ENCODE measurements at regions of chr15 and their contacts with region 1.

Region 1: DNA sequence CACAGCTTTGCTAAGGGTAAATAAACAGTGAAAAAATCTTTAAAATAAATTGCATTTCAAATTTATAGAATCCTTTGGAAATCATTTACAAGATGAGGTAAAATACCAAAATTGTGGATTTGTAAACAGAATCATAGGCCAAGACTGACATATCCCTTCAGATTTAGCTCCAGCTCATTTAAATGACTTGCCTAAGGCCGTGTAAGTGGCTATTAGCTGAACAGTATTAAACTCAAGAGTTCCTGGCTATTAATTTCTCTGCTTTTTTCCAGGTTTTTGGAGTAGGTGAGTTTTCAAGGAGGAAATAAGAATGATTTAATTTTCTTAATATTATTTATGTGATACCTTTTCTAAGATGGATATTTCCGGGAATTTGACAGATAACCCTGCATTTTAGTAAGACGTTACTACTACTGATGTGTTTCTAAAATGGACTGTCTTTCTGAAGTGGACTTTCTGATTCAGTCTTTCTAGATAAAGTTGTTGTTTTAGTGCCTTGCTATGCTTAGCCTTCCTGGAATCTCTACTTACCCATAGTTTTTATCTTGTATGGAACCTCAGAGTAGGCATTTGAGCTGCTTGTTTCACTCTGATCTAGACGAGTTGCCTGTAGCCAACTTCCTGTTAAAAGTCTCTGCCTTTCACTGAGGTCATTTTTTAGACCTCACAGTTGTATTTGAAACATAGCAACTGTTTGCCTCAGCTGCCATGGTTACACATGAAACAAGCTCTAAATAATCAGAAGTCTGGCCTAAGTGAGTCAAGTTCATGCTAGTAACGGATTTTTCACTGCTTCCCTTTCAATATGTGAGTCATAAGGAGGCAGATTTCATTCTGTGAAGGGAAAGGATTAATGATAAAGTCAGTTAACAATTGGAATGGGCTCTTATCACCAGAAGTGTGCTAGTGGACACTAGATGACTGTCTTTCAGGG is 127.0 kb downstream of the KLHL25 start:
- DNase-seq: peak in 1 of 2 donors; percentile 87
- H3K4me3 ChIP-seq: peak overlapping the region in 1 of 2 donors; percentile 28
- H3K27ac ChIP-seq: peak overlapping the region; percentile 92 to 93
- H3K4me1 ChIP-seq: peaks cover 15 to 23% of the 10 kb centered on the region in 2 donors
- H3K27me3 ChIP-seq: no peaks in the 10 kb centered on the region
- CTCF ChIP-seq: no peak

Region 2: GRCh38 chr15:85630311-85630710 is 37.4 kb before region 1 on chr15:
- intact Hi-C with region 1: no loop called
- DNase-seq: no peak
- H3K4me3 ChIP-seq: no peak overlapping the region
- H3K27ac ChIP-seq: no peak overlapping the region
- H3K4me1 ChIP-seq: peaks cover 4 to 38% of the 10 kb centered on the region in 2 donors
- H3K27me3 ChIP-seq: no peaks in the 10 kb centered on the region
- CTCF ChIP-seq: no peak

Region 3: DNA sequence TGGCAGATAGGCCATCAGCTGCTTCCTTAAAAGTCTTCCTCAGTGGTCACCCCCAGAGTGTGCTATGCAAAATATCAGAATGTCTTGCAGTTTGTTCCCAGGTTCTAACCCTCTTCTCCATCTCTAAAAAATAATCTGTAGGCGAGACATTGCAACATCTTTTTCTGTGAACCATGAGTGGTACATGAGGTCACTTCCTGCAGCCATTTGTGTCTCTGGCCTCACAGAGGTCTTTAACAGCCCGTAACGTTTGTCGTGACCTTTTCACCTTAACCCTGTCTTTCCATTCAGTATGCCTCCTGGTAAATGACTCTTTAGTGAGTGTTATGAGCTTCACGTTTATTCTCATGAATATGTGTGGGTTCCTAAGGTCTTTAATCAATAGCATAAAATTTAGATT is 18.4 kb before region 1 on chr15:
- intact Hi-C with region 1: loop called (anchors 2 kb)
- DNase-seq: peak in 1 of 2 donors; percentile 73
- H3K4me3 ChIP-seq: no peak overlapping the region
- H3K27ac ChIP-seq: peak overlapping the region; percentile 51 to 75
- H3K4me1 ChIP-seq: peaks cover 0 to 30% of the 10 kb centered on the region in 2 donors
- H3K27me3 ChIP-seq: no peaks in the 10 kb centered on the region
- CTCF ChIP-seq: no peak

Region 4: DNA sequence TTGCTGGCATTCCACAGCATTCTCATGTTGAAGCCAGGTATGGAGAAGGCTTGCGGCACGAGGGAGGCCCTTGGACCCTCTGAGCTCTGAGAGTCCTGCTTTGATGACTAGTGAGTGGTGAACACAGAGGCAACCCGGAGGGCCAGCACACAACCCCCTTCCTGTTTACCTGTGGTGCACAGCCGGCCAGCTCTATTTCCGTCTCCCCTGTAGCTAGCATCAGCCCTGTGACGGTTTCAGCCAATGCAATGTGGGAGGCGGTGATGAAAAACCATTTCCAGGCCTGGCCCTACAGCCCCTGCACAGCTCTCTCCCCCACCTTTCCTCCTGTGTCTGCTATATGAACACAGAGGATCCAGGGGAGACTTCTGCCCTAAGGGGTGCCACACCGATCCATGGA is 203.8 kb after region 1 on chr15:
- intact Hi-C with region 1: no loop called
- DNase-seq: no peak
- H3K4me3 ChIP-seq: no peak overlapping the region
- H3K27ac ChIP-seq: no peak overlapping the region
- H3K4me1 ChIP-seq: no peaks in the 10 kb centered on the region
- H3K27me3 ChIP-seq: no peaks in the 10 kb centered on the region
- CTCF ChIP-seq: no peak